Esophagus squamous epithelium (tissue), 5 donors: ENCODE measurements at regions of chr2 and their contacts with region 1.

Region 1: DNA sequence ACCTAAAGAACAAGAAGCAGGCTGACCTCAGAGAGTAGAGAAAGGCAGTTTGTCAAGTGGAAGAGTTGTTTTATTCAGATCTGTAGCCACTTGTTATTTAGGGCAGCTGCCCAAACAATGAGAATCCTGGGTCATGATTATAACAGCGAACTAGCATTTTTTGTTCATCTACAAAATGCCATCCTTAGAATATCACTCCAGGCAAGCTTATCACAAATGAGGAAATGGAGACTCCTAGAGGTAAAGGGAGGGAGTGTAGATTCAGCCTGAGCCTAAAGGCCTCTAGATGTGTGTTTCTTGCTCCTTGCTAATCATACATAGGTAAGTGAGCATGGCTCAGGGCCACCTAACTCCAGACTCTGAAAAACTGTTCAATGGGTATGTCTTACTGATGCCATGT is 126.1 kb downstream of the HNMT start:
- DNase-seq: no peak
- H3K4me3 ChIP-seq: no peak overlapping the region
- H3K27ac ChIP-seq: no peak overlapping the region
- H3K4me1 ChIP-seq: peaks cover 0 to 9% (median 0%) of the 10 kb centered on the region in 3 donors
- H3K27me3 ChIP-seq: peaks cover 0 to 3% (median 0%) of the 10 kb centered on the region in 4 donors
- CTCF ChIP-seq: peak in 5 of 6 experiments; percentile 47 to 82 (median 62)
- POLR2A ChIP-seq: no peak

Region 2: GRCh38 chr2:137943678-137944347 is 146.5 kb before region 1 on chr2:
- intact Hi-C with region 1: loop called (anchors 5 kb)
- DNase-seq: no peak
- H3K4me3 ChIP-seq: no peak overlapping the region
- H3K27ac ChIP-seq: no peak overlapping the region
- H3K4me1 ChIP-seq: no peaks in the 10 kb centered on the region
- H3K27me3 ChIP-seq: no peaks in the 10 kb centered on the region
- CTCF ChIP-seq: peak in 1 of 6 experiments; percentile 29
- POLR2A ChIP-seq: no peak